CD14-positive monocyte (primary cell): ENCODE measurements at regions of chr5 and their contacts with region 1.

Region 1: GRCh38 chr5:88140856-88141752 is 127.5 kb downstream of the TMEM161B start:
- DNase-seq: peak; percentile 11 to 47 (median 17)
- H3K4me3 ChIP-seq: peak overlapping the region in 1 of 3 experiments; percentile 61
- H3K4me3 Mint-ChIP-seq: no peak overlapping the region
- H3K27ac ChIP-seq: no peak overlapping the region
- H3K27ac Mint-ChIP-seq: no peak overlapping the region
- H3K4me1 ChIP-seq: peaks cover 13 to 14% of the 10 kb centered on the region in 2 donors
- H3K4me1 Mint-ChIP-seq: peaks cover 10% of the 10 kb centered on the region
- H3K27me3 ChIP-seq: peaks cover 65 to 80% of the 10 kb centered on the region in 2 donors
- H3K27me3 Mint-ChIP-seq: peaks cover 2 to 27% (median 6%) of the 10 kb centered on the region in 3 donors
- CTCF ChIP-seq: no peak

Region 2: DNA sequence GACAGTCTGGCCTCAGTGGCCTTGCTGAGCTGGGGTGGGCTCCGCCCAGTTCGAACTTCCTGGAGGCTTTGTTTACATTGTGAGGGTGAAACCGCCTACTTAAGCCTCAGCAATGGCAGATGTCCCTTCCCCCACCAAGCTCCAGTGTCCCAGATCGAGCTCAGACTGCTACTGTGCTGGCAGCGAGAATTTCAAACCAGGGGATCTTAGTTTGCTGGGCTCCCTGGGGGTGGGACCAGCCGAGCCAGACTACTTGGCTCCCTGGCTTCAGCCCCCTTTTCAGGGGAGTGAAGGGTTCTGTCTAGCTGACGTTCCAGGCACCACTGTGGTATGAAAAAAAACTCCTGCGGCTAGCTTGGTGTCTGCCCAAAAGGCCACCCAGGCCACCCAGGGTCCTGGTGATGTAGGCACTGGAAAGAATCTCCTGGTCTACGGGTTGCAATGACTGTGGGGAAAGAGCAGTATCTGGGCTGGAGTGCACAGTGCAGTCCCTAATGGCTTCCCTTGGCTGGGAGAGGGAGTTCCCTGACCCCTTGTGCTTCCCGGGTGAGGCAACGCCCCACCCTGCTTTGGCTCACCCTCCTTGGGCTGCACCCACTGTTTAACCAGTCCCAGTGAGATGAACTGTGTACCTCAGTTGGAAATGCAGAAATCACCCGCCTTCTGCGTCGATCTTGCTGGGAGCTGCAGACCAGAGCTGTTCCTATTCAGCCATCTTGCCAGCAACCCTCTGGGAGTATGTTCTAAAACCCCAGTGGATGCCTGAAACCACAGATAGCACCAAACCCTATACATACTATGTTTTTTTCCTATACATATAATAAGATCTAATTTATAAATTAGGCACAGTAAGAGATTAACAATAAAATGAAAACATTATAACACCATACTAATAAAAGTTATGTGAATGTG is 32.0 kb after region 1 on chr5:
- intact Hi-C with region 1: no loop called
- DNase-seq: no peak
- H3K4me3 ChIP-seq: no peak overlapping the region
- H3K4me3 Mint-ChIP-seq: no peak overlapping the region
- H3K27ac ChIP-seq: no peak overlapping the region
- H3K27ac Mint-ChIP-seq: no peak overlapping the region
- H3K4me1 ChIP-seq: no peaks in the 10 kb centered on the region
- H3K4me1 Mint-ChIP-seq: no peaks in the 10 kb centered on the region
- H3K27me3 ChIP-seq: no peaks in the 10 kb centered on the region
- H3K27me3 Mint-ChIP-seq: no peaks in the 10 kb centered on the region
- CTCF ChIP-seq: no peak

Region 3: DNA sequence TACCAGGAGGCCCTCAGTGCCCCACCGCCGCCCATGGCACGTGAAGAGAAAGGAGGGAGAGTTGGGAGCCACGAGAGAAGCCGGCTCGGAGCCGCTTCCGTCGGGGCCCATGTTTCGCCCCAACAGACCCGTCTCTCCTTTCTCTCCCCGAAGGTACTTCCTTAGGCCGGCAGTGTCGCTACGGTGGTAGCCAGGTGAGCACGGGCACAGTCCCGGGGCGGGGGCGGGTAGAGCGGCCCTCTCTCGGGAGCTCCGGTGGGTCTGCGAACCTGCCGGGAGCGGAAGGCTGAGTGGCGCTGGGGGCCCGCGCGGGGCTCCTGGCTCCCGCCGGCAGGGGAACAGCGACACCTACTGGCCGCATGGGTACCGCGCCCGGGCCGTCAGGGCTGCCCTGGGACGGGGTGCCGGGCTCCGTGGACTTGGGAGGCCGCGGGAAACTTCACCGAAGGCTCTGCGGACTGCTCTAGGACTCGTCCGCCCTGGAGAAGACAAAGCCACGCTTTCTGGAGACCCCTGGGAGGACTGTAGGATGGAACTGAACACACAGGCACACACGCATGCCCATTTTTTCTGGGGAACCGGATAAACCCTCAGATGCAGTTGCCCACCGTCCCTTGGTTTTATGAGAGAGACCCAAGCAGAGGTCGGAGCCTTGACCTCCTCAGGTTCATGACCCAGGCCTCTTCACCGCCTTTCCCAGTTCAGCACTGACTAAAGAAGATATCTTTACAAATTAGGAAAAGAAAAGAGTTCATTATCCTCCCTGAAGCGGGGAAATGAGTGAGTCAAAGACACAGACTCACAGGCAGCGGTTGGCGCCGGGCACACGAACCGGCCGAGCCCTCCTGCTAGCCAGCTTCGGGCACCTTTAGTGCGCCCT is 539.4 kb after region 1 on chr5:
- intact Hi-C with region 1: loop called in 1 of 2 experiments (anchors 10 kb)
- DNase-seq: peak; percentile 53 to 69 (median 58)
- H3K4me3 ChIP-seq: peak overlapping the region; percentile 21 to 77 (median 27)
- H3K4me3 Mint-ChIP-seq: peak overlapping the region; percentile 71 to 87
- H3K27ac ChIP-seq: no peak overlapping the region
- H3K27ac Mint-ChIP-seq: no peak overlapping the region
- H3K4me1 ChIP-seq: peaks cover 12 to 20% of the 10 kb centered on the region in 2 donors
- H3K4me1 Mint-ChIP-seq: peaks cover 32% of the 10 kb centered on the region
- H3K27me3 ChIP-seq: peaks cover 92 to 99% of the 10 kb centered on the region in 2 donors
- H3K27me3 Mint-ChIP-seq: peaks cover 94 to 99% (median 95%) of the 10 kb centered on the region in 3 donors
- CTCF ChIP-seq: peak; percentile 99